HepG2 (cell line): ENCODE measurements at regions of chr11 and their contacts with region 1.

Region 1: DNA sequence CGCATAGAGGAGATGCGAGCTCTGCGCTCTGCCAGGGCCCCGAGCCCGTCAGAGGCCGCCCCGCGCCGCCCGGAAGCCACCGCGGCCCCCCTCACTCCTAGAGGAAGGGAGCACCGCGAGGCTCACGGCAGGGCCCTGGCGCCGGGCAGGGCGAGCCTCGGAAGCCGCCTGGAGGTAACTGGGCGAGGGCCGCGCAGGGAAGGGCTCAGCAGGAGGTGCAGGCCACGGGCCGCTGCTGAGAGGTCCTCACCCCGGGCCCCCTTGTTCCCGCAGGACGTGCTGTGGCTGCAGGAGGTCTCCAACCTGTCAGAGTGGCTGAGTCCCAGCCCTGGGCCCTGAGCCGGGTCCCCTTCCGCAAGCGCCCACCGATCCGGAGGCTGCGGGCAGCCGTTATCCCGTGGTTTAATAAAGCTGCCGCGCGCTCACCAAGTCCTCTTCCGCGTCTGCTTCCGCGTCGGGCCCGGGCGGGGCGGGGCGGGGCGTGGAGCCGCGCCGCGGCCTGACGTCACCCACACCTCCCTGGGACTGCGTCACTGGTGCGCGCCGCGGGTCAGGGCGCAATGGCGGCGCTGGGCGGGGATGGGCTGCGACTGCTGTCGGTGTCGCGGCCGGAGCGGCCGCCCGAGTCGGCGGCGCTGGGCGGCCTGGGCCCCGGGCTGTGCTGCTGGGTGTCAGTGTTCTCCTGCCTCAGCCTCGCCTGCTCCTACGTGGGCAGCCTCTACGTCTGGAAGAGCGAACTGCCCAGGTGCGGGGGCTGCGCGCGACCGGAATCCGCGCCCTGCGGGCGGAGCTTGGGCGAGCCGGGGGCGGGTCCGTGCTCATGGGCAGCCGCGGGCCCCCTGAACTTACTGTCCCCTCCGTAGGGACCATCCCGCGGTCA is at the start of gene RCE1:
- DNase-seq: peak; percentile 71
- ATAC-seq: peak; percentile 78
- H3K4me3 ChIP-seq: peak within 1 kb of the TSS; percentile 87 to 99 (median 87)
- H3K27ac ChIP-seq: peak within 1 kb of the TSS; percentile 82
- H3K4me1 ChIP-seq: peaks cover 28% of the 10 kb centered on the region
- H3K27me3 ChIP-seq: no peaks in the 10 kb centered on the region; a peak in 1 of 5 replicates
- CTCF ChIP-seq: no peak
- EP300 ChIP-seq: peak; percentile 21 to 47; a peak in 1 of 4 replicates
- POLR2A ChIP-seq: peak; percentile 87 to 92
- RAD21 ChIP-seq: peak; percentile 40; the same call in 1 of the 2 replicates
- total RNA-seq, gene RCE1: 8.0 and 22.2 TPM in 2 replicates

Region 2: GRCh38 chr11:66568124-66568916 is 274.8 kb before region 1 on chr11 and contains the start of gene CTSF:
- CTCF ChIA-PET with region 1: no interaction called
- POLR2A ChIA-PET with region 1: no interaction called
- in situ Hi-C with region 1: loop called (anchors 25 kb)
- intact Hi-C with region 1: no loop called
- DNase-seq: no peak
- ATAC-seq: no peak
- H3K4me3 ChIP-seq: no peak within 1 kb of the TSS
- H3K27ac ChIP-seq: no peak within 1 kb of the TSS
- H3K4me1 ChIP-seq: no peaks in the 10 kb centered on the region
- H3K27me3 ChIP-seq: peaks cover 3 to 43% of the 10 kb centered on the region in 2 experiments; a peak in 4 of 5 replicates
- CTCF ChIP-seq: no peak
- EP300 ChIP-seq: no peak
- POLR2A ChIP-seq: no peak
- RAD21 ChIP-seq: no peak
- total RNA-seq, gene CTSF: not detected in 2 replicates

Region 3: GRCh38 chr11:66855574-66856495 is 12.7 kb after region 1 on chr11:
- CTCF ChIA-PET with region 1: no interaction called
- POLR2A ChIA-PET with region 1: interaction called, 24 read pairs
- in situ Hi-C with region 1: no loop called
- intact Hi-C with region 1: no loop called
- DNase-seq: peak; percentile 62
- ATAC-seq: peak; percentile 74
- H3K4me3 ChIP-seq: peak overlapping the region; percentile 49 to 67 (median 63); a peak in 5 of 6 replicates
- H3K27ac ChIP-seq: peak overlapping the region; percentile 43
- H3K4me1 ChIP-seq: peaks cover 11% of the 10 kb centered on the region
- H3K27me3 ChIP-seq: no peaks in the 10 kb centered on the region
- CTCF ChIP-seq: no peak
- EP300 ChIP-seq: no peak
- POLR2A ChIP-seq: peak in 1 of 2 experiments; percentile 58; a peak in 2 of 4 replicates
- RAD21 ChIP-seq: no peak

Region 4: GRCh38 chr11:66883016-66883968 is 40.2 kb after region 1 on chr11:
- CTCF ChIA-PET with region 1: no interaction called
- POLR2A ChIA-PET with region 1: no interaction called
- in situ Hi-C with region 1: no loop called
- intact Hi-C with region 1: no loop called
- DNase-seq: peak; percentile 45
- ATAC-seq: peak; percentile 76
- H3K4me3 ChIP-seq: no peak overlapping the region
- H3K27ac ChIP-seq: no peak overlapping the region
- H3K4me1 ChIP-seq: peaks cover 29% of the 10 kb centered on the region
- H3K27me3 ChIP-seq: no peaks in the 10 kb centered on the region
- CTCF ChIP-seq: peak; percentile 73
- EP300 ChIP-seq: no peak
- POLR2A ChIP-seq: no peak
- RAD21 ChIP-seq: peak; percentile 67

Region 5: DNA sequence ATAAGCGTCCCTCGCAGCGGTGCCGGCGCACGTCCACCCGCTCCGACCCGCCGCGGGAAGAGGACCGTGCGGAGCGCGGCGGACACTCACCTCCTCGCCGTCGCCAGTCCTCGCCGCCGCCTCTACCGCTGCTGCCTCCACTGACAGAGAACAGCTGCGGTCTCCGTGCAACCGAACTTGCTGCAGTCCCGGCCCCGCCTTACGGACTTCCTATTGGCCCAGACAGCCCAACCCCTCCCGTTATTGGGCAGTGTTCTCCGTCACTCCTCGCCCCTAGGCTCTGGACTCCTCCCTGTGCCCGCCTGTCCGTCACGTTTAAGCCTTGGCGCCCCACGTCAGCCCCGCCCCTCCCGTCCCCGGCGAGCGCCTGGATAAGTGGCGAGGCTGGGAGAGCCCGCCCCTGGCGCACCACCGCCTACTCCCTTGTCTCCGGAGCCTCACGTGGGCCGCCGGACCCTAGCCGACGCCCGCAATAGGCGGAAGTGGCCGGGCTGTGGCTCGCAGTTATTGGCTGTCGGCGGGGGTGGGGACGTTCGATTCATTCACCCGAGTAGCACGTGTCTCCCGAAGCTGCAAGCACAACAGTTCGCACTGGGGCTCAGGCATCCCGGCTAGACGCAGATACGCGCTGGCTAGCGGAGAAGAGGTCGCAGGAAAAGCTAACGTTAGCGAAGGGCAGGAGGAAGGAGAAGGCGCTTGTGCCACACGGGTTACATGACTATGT is 115.3 kb after region 1 on chr11 and contains the start of gene PC:
- CTCF ChIA-PET with region 1: no interaction called
- POLR2A ChIA-PET with region 1: interaction called, 11 read pairs
- in situ Hi-C with region 1: no loop called
- intact Hi-C with region 1: no loop called
- DNase-seq: peak; percentile 98
- ATAC-seq: peak; percentile 95
- H3K4me3 ChIP-seq: peak within 1 kb of the TSS; percentile 63 to 84 (median 82)
- H3K27ac ChIP-seq: peak within 1 kb of the TSS; percentile 69
- H3K4me1 ChIP-seq: peaks cover 29% of the 10 kb centered on the region
- H3K27me3 ChIP-seq: no peaks in the 10 kb centered on the region
- CTCF ChIP-seq: peak; percentile 4; the same call in 1 of the 2 replicates
- EP300 ChIP-seq: peak in 1 of 2 experiments; percentile 27; a peak in 1 of 4 replicates
- POLR2A ChIP-seq: peak; percentile 30 to 71; a peak in 3 of 4 replicates
- RAD21 ChIP-seq: no peak
- total RNA-seq, gene PC: 32.6 and 39.0 TPM in 2 replicates

Region 6: DNA sequence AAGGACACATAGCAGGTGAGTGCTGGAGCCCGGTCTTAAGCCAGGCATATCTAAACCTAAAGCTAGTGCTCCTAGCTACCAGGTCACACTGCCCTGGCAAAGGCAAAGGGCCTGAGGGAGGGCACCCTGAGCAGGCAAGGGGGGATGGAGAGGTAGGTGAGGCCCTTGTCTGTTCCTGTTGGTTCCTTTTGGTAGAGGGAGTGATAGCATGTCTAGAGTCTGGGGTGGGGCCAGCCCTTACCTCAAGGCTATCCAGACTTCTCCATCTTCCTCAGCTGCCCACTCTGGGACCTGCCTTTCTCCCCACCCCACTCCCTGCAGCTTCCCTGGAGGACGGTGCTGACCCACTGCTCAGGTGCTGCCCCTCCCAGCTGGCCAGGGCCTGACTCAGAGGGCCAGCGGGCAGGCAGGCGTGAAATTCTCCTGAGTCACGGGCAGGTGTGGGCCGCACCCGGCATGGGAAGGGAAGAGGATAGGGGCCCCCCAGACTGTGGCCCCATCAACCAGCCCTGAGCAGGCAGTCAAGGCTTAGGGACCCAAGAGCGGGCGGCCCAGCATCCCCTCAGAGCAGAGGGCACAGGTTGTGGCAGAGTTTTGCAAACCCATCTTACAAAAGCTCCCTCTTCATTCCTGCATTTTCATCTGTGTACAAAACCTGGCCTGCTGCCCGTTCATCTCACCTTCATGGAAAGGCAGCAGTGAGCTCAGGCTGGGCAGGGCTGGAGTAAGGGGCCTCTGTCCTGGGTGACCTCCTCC is 219.3 kb after region 1 on chr11:
- CTCF ChIA-PET with region 1: no interaction called
- POLR2A ChIA-PET with region 1: no interaction called
- in situ Hi-C with region 1: no loop called
- intact Hi-C with region 1: no loop called
- DNase-seq: no peak
- ATAC-seq: no peak
- H3K4me3 ChIP-seq: no peak overlapping the region
- H3K27ac ChIP-seq: no peak overlapping the region
- H3K4me1 ChIP-seq: peaks cover 13% of the 10 kb centered on the region
- H3K27me3 ChIP-seq: peaks cover 0 to 2% of the 10 kb centered on the region in 2 experiments; a peak in 1 of 5 replicates
- CTCF ChIP-seq: no peak
- EP300 ChIP-seq: no peak
- POLR2A ChIP-seq: no peak
- RAD21 ChIP-seq: no peak